ENCODE measurements at regions of chr12 and their contacts with region 1.

Region 1: GRCh38 chr12:56034589-56035332 is 7.0 kb upstream of the RPS26 start:
- DNase-seq: no peak
- H3K4me3 ChIP-seq: no peak overlapping the region
- H3K27ac ChIP-seq: no peak overlapping the region
- H3K4me1 ChIP-seq: peaks cover 0 to 3% (median 2%) of the 10 kb centered on the region in 3 donors
- H3K27me3 ChIP-seq: no peaks in the 10 kb centered on the region
- CTCF ChIP-seq: no peak
- POLR2A ChIP-seq: no peak

Region 2: DNA sequence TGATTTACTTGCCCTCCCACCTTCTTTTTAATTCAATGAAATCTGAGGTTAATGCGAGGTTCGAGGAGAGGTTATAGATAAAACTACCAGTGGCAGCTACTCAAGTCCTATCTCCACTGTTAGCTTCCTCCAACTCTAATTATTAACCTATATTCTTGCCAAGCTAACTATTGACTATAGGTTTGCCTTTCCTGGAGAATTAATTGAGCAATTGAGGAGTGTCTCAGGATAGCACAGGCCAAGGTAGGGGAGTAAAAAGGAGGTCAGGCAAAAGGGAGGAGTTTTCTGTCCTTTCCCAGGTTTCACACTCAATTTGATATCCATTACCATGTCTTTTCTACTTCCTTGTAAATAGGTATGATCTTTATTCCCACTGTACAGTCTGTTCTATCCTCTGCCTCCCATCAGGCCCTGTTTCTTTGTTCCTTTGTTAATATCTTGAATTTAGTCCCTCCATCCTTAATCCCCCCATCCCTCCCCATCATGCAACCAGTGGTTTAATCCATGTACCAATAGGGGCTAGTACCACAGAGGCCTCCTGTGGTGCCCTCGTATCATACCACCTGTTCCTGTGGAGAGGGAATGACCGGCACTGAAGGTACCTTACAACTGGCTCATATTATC is 41.4 kb before region 1 on chr12:
- intact Hi-C with region 1: loop called (anchors 5 kb)
- DNase-seq: no peak
- H3K4me3 ChIP-seq: no peak overlapping the region
- H3K27ac ChIP-seq: no peak overlapping the region
- H3K4me1 ChIP-seq: peaks cover 11 to 19% (median 13%) of the 10 kb centered on the region in 3 donors
- H3K27me3 ChIP-seq: no peaks in the 10 kb centered on the region
- CTCF ChIP-seq: no peak
- POLR2A ChIP-seq: no peak